Activated CD4-positive, alpha-beta T cell treated with anti-CD3 and anti-CD28 coated beads for 36 hours (primary cell): ENCODE measurements at regions of chr7 and their contacts with region 1.

Region 1: GRCh38 chr7:44980393-44981034 is 1.7 kb upstream of the MYO1G start:
- DNase-seq: peak; percentile 94
- ATAC-seq: peak; percentile 48
- H3K4me3 Mint-ChIP-seq: peak overlapping the region; percentile 99
- H3K27ac Mint-ChIP-seq: peak overlapping the region; percentile 99
- H3K4me1 Mint-ChIP-seq: peaks cover 68% of the 10 kb centered on the region
- H3K27me3 Mint-ChIP-seq: no peaks in the 10 kb centered on the region

Region 2: DNA sequence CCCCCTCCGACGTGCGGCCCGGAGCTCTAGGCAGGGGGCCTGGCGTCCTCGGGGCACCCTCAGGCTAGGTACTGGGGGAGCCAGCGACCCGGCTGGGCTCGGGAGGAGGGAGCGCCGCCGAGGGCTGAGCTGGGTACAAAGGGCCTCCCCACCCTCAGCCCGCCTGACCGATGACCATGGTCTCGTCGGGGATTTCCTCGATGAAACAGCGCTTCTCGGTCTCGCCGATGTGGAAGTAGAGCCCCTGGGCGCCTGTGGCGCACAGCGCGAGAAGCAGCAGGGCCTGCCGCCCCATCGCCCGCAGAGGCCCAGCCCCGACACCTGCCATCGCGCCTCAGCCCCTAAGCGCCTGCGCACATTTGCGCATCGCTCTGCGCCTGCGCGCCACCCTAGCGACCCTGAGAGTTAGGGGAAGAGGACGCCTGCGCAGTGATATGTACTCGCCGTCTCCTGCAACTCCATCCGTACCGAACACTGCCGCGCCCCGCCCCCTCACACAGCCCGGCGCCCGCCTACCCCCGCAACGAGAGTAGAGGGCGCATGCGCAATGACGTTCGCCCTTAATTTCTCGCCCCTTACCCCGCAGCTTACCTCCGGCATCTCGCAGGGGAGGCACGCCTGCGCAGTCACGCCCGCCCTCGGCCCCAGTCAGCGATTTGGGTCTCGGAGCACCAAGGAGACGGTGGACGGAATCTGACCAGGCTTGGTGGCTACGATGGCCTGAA is 398.5 kb before region 1 on chr7 and contains the start of gene TMED4:
- CTCF ChIA-PET with region 1: interaction called, 3 read pairs
- POLR2A ChIA-PET with region 1: no interaction called
- intact Hi-C with region 1: loop called in 1 of 2 experiments (anchors 1 kb)
- DNase-seq: peak; percentile 100
- ATAC-seq: peak; percentile 95
- H3K4me3 Mint-ChIP-seq: peak within 1 kb of the TSS; percentile 85
- H3K27ac Mint-ChIP-seq: peak within 1 kb of the TSS; percentile 92
- H3K4me1 Mint-ChIP-seq: peaks cover 33% of the 10 kb centered on the region
- H3K27me3 Mint-ChIP-seq: no peaks in the 10 kb centered on the region
- total RNA-seq, gene TMED4: 71.6 to 73.0 TPM

Region 3: DNA sequence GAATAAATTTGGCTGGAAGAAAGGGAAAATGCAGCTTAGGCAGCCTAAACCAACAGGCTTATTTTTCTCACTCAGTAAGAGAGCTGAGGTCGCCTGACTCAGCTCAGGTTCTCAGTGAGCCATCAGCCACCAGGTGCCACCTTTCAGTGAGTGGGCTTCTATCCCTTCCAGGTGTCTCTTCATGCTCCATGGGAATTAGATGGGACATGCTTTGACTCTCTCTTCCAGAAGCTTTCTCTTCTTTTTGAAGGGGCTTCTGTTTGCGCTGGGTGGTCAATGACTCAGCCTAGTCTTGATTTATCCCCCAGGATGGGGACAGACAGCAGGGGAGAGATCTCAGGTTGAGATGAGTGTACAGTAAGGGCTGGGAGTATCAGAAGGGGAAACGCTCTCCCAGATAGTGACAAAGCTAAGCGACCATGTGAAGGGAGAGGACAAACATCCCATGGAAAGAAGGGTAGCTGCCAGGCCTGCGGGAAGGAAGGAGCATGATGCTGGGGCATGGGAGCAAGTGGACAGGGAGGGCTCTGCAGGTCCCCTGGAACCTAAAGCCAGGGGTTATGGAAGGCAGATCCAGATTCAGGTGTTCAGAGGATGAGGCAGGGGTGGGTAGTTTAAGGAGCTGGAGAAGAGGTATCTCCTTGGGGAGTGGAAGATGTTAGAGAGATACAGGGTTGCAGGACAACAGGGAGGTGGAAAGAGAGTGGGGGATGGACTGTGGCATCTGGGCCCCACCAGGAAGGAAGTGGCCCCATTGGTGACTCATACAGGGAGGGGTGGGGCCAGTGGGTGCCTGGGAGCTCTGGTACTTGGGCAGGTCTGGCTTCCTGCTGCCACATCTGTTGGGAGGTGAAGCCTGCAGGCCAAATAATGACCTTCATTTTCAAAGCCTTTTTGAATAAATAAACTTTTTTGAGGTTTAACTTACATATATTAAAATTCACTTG is 341.6 kb before region 1 on chr7:
- CTCF ChIA-PET with region 1: interaction called, 3 read pairs
- POLR2A ChIA-PET with region 1: interaction called, 3 read pairs
- intact Hi-C with region 1: loop called (anchors 2 to 5 kb)
- DNase-seq: peak; percentile 90
- ATAC-seq: peak; percentile 71
- H3K4me3 Mint-ChIP-seq: peak overlapping the region; percentile 73
- H3K27ac Mint-ChIP-seq: peak overlapping the region; percentile 100
- H3K4me1 Mint-ChIP-seq: peaks cover 75% of the 10 kb centered on the region
- H3K27me3 Mint-ChIP-seq: no peaks in the 10 kb centered on the region

Region 4: GRCh38 chr7:44962483-44963251 is 17.8 kb before region 1 on chr7:
- CTCF ChIA-PET with region 1: no interaction called
- POLR2A ChIA-PET with region 1: interaction called, 10 read pairs
- intact Hi-C with region 1: no loop called
- DNase-seq: peak; percentile 35
- ATAC-seq: no peak
- H3K4me3 Mint-ChIP-seq: no peak overlapping the region
- H3K27ac Mint-ChIP-seq: no peak overlapping the region
- H3K4me1 Mint-ChIP-seq: peaks cover 20% of the 10 kb centered on the region
- H3K27me3 Mint-ChIP-seq: no peaks in the 10 kb centered on the region

Region 5: GRCh38 chr7:45111298-45112223 is 131.0 kb after region 1 on chr7 and contains the start of gene TBRG4:
- CTCF ChIA-PET with region 1: interaction called, 4 read pairs
- POLR2A ChIA-PET with region 1: interaction called, 7 read pairs
- intact Hi-C with region 1: loop called (anchors 1 to 2 kb)
- DNase-seq: peak; percentile 97
- ATAC-seq: peak; percentile 95
- H3K4me3 Mint-ChIP-seq: peak within 1 kb of the TSS; percentile 94
- H3K27ac Mint-ChIP-seq: peak within 1 kb of the TSS; percentile 96
- H3K4me1 Mint-ChIP-seq: peaks cover 35% of the 10 kb centered on the region
- H3K27me3 Mint-ChIP-seq: peaks cover 2% of the 10 kb centered on the region
- total RNA-seq, gene TBRG4: 158 to 163 TPM

Region 6: DNA sequence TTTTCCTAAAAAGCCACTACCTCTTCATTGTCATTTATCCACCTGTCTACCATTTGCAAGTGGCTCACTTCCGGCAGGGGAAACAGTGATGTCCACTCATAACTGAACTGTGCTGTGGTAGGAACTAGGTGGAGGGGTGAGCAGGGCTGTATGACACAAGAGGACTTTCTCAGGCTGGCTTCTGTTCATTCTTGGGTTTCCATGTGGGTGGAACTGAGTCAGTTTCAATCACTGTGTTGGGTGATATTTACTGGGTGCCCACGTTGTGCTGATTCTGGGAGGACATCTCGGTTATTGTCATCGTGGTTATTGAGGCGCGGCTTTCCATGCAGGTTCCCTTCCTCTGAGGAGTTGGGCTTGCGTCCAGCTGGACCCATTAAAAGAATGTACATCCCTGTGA is 215.9 kb after region 1 on chr7:
- CTCF ChIA-PET with region 1: no interaction called
- POLR2A ChIA-PET with region 1: no interaction called
- intact Hi-C with region 1: loop called in 1 of 2 experiments (anchors 1 kb)
- DNase-seq: peak; percentile 81
- ATAC-seq: peak; percentile 98
- H3K4me3 Mint-ChIP-seq: no peak overlapping the region
- H3K27ac Mint-ChIP-seq: no peak overlapping the region
- H3K4me1 Mint-ChIP-seq: peaks cover 23% of the 10 kb centered on the region
- H3K27me3 Mint-ChIP-seq: peaks cover 26% of the 10 kb centered on the region

Region 7: DNA sequence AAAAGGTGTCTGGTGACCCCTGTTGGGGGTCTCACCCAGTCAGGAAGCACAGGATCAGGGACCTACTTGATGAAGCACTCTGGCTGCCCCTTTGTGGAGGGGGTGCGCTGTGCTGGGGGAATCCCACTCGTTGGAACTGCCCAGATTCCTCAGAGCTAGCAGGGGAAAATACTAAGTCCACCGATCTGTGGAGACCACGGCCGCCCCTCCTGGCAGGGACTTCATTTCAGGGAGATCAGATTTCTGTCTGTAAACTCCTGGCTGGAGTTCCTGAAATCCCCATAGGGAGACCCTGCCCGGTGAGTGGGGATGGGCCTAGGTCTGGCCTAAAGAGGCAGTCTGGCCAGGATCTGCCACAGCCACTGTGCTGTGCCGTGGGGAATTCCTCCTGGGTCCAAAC is 514.4 kb after region 1 on chr7:
- CTCF ChIA-PET with region 1: no interaction called
- POLR2A ChIA-PET with region 1: no interaction called
- intact Hi-C with region 1: no loop called
- DNase-seq: no peak
- ATAC-seq: no peak
- H3K4me3 Mint-ChIP-seq: no peak overlapping the region
- H3K27ac Mint-ChIP-seq: no peak overlapping the region
- H3K4me1 Mint-ChIP-seq: no peaks in the 10 kb centered on the region
- H3K27me3 Mint-ChIP-seq: peaks cover 14% of the 10 kb centered on the region